ENCODE measurements at regions of chr2 and their contacts with region 1.

Region 1: GRCh38 chr2:67938053-67938452 is 124.8 kb downstream of the C1D start:
- DNase-seq: no peak
- H3K27ac ChIP-seq: no peak overlapping the region
- CTCF ChIP-seq: no peak

Region 2: DNA sequence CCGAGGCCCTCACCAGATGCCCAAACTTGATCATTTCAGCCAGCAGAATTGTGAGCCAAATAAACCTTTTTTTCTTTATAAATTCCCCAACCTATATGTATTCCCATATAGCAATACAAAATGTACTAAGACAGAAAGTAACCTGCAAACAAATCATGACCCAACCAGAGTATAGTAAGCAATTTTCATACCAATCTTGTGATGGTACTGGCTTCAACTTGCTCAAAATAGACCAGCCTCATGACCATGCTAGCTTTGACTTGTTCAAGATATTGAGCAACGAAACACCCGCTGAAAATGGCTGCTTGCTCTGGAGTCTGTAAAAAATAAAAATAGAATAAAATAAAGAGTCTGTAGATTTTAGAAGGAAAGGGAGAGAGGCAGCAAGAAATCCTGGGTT is 27.2 kb after region 1 on chr2:
- CTCF ChIA-PET with region 1: interaction called, 10 read pairs
- POLR2A ChIA-PET with region 1: no interaction called
- DNase-seq: peak; percentile 51
- H3K27ac ChIP-seq: peak overlapping the region; percentile 93
- CTCF ChIP-seq: no peak

Measured in RWPE1 (cell line).